ENCODE measurements at regions of chr3 and their contacts with region 1.

Region 1: GRCh38 chr3:81676706-81677456 is 84.6 kb downstream of the GBE1 start:
- DNase-seq: no peak
- H3K4me3 ChIP-seq: no peak overlapping the region
- H3K27ac ChIP-seq: no peak overlapping the region
- H3K4me1 ChIP-seq: no peaks in the 10 kb centered on the region
- H3K27me3 ChIP-seq: no peaks in the 10 kb centered on the region
- CTCF ChIP-seq: no peak

Region 2: GRCh38 chr3:81760924-81761903 is 84.3 kb after region 1 on chr3 and contains the start of gene GBE1:
- CTCF ChIA-PET with region 1: no interaction called
- POLR2A ChIA-PET with region 1: no interaction called
- intact Hi-C with region 1: loop called (anchors 5 kb)
- DNase-seq: peak; percentile 95
- H3K4me3 ChIP-seq: peak within 1 kb of the TSS; percentile 72
- H3K27ac ChIP-seq: peak within 1 kb of the TSS; percentile 95
- H3K4me1 ChIP-seq: peaks cover 7% of the 10 kb centered on the region
- H3K27me3 ChIP-seq: no peaks in the 10 kb centered on the region
- CTCF ChIP-seq: peak; percentile 49
- total RNA-seq, gene GBE1: 5.6 and 8.2 TPM in 2 replicates

Measured in A673 (cell line).